ENCODE measurements at regions of chr13 and their contacts with region 1.

Region 1: GRCh38 chr13:31044377-31045285 is 112.2 kb downstream of the TEX26 start:
- DNase-seq: peak; percentile 93
- H3K4me3 Mint-ChIP-seq: no peak overlapping the region
- H3K27ac Mint-ChIP-seq: peak overlapping the region; percentile 78
- H3K4me1 Mint-ChIP-seq: peaks cover 43% of the 10 kb centered on the region
- H3K27me3 Mint-ChIP-seq: peaks cover 2% of the 10 kb centered on the region

Region 2: GRCh38 chr13:30371649-30372265 is 672.9 kb before region 1 on chr13:
- CTCF ChIA-PET with region 1: no interaction called
- intact Hi-C with region 1: loop called (anchors 10 kb)
- DNase-seq: peak; percentile 87
- H3K4me3 Mint-ChIP-seq: peak overlapping the region; percentile 58
- H3K27ac Mint-ChIP-seq: peak overlapping the region; percentile 87
- H3K4me1 Mint-ChIP-seq: peaks cover 75% of the 10 kb centered on the region
- H3K27me3 Mint-ChIP-seq: no peaks in the 10 kb centered on the region

Region 3: GRCh38 chr13:30679483-30680330 is 364.9 kb before region 1 on chr13:
- CTCF ChIA-PET with region 1: no interaction called
- intact Hi-C with region 1: loop called (anchors 1 kb)
- DNase-seq: peak; percentile 54
- H3K4me3 Mint-ChIP-seq: no peak overlapping the region
- H3K27ac Mint-ChIP-seq: no peak overlapping the region
- H3K4me1 Mint-ChIP-seq: peaks cover 4% of the 10 kb centered on the region
- H3K27me3 Mint-ChIP-seq: no peaks in the 10 kb centered on the region

Region 4: GRCh38 chr13:30865123-30866049 is 179.2 kb before region 1 on chr13:
- CTCF ChIA-PET with region 1: interaction called, 13 read pairs
- intact Hi-C with region 1: loop called (anchors 1 kb)
- DNase-seq: peak; percentile 64
- H3K4me3 Mint-ChIP-seq: no peak overlapping the region
- H3K27ac Mint-ChIP-seq: no peak overlapping the region
- H3K4me1 Mint-ChIP-seq: peaks cover 3% of the 10 kb centered on the region
- H3K27me3 Mint-ChIP-seq: peaks cover 8% of the 10 kb centered on the region

Region 5: DNA sequence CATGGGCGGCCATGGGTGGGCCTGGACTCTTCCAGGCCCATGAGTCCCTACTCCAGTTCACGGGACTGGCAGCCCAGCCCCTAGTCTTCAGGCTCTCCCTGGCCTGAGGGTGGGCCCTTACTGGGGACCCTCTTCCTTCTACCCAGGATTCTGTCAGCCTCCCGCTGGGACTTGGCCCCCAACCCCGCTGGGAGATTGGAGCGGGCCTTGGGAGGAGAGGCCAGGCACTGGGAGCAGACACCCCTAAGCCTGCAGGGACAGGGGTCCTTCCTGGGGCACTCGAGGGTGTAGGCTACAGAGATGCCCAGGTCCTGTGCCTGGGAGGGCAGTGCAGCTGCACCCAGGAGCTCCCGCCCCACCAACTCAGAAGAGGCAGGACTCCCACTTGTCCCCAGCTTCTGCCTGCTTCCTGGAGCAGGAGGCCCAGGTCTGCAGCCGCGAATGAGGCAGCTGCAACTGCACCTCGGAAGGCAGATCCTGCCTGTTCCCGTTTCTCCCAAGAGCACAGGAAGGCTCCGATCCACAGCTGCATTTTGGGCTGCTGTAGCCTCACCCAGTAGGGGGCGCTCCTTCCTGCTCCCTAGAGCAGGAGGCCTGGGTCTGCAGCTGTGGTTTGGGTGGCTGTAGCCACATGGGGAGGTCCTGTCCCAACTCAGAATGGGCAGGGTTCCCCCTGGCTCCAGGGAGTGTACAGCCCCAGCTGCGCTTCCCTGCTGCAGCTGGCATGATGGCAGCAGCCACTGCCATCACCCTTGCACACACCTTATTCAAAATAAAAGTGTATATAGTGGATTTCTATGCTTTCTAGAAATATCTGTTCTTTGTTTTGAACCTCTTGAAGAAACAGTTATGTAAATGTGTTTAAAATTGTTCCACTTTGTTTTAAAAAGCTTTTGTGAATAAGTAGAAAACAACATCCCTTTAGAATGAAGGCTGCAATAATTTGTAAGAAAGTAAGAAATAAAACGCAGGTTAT is 65.4 kb before region 1 on chr13:
- CTCF ChIA-PET with region 1: interaction called, 32 read pairs
- intact Hi-C with region 1: loop called (anchors 1 kb)
- DNase-seq: peak; percentile 57
- H3K4me3 Mint-ChIP-seq: no peak overlapping the region
- H3K27ac Mint-ChIP-seq: no peak overlapping the region
- H3K4me1 Mint-ChIP-seq: no peaks in the 10 kb centered on the region
- H3K27me3 Mint-ChIP-seq: peaks cover 5% of the 10 kb centered on the region

Region 6: GRCh38 chr13:31199849-31200636 is 155.4 kb after region 1 on chr13 and contains the start of gene B3GLCT:
- CTCF ChIA-PET with region 1: no interaction called
- intact Hi-C with region 1: loop called (anchors 2 kb)
- DNase-seq: peak; percentile 65
- H3K4me3 Mint-ChIP-seq: peak within 1 kb of the TSS; percentile 83
- H3K27ac Mint-ChIP-seq: peak within 1 kb of the TSS; percentile 68
- H3K4me1 Mint-ChIP-seq: peaks cover 26% of the 10 kb centered on the region
- H3K27me3 Mint-ChIP-seq: no peaks in the 10 kb centered on the region
- total RNA-seq, gene B3GLCT: 1.2 to 1.5 TPM

Measured in activated naive CD4-positive, alpha-beta T cell treated with anti-CD3 and anti-CD28 coated beads for 36 hours (primary cell).